Activated CD8-positive, alpha-beta T cell treated with anti-CD3 and anti-CD28 coated beads, Interleukin-2, amount 10 ng/mL, durations not matched to agents 7 days and 5 days (primary cell): ENCODE measurements at regions of chr1 and their contacts with region 1.

Region 1: DNA sequence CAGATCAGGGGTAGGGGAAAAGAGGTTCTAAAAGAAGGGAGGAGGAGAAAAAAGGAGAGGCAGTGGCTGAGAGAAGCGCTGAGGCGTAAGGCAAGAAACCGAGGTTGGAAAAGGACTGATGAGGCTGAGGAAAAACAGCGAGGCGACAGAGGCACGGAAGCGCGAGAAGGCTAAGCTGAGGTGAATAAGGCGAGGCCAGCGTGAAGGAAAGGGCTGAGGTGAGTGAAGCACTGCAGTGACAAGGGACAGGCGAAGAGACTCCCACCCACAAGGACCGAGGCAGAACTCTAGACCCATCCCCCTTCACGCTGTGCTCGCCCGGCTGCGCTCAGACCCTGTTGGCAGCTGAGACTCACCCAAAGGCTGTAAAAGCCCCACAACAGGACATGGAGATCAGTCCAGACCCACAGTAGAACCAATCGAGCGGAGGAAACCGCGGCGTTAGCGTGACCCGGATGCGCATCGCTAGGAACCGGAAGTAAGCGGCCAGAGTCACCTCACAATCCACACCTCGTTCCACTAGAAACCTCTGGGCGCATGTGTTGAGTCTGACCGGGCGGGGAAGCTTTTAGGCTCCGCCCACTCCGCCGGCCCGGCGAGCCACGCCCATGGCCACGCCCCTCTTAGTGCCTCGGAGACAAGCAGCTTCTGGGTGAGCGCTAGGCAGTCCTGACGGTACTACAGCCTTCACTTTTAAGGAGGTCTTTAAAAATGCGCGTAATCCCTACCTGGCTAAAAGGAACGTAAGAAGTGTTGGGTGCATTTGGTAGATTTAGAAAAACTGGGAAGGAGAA is at the start of gene EYA3:
- DNase-seq: peak; percentile 99
- ATAC-seq: peak; percentile 93
- H3K4me3 Mint-ChIP-seq: peak within 1 kb of the TSS; percentile 91
- H3K27ac Mint-ChIP-seq: peak within 1 kb of the TSS; percentile 96
- H3K4me1 Mint-ChIP-seq: peaks cover 38% of the 10 kb centered on the region
- H3K27me3 Mint-ChIP-seq: peaks cover 5% of the 10 kb centered on the region
- total RNA-seq, gene EYA3: 33.5 to 34.5 TPM

Region 2: GRCh38 chr1:27760426-27760825 is 327.9 kb before region 1 on chr1:
- CTCF ChIA-PET with region 1: no interaction called
- POLR2A ChIA-PET with region 1: no interaction called
- DNase-seq: no peak
- ATAC-seq: no peak
- H3K4me3 Mint-ChIP-seq: no peak overlapping the region
- H3K27ac Mint-ChIP-seq: no peak overlapping the region
- H3K4me1 Mint-ChIP-seq: no peaks in the 10 kb centered on the region
- H3K27me3 Mint-ChIP-seq: no peaks in the 10 kb centered on the region

Region 3: GRCh38 chr1:27849951-27850350 is 238.4 kb before region 1 on chr1:
- CTCF ChIA-PET with region 1: no interaction called
- POLR2A ChIA-PET with region 1: no interaction called
- DNase-seq: no peak
- ATAC-seq: no peak
- H3K4me3 Mint-ChIP-seq: no peak overlapping the region
- H3K27ac Mint-ChIP-seq: no peak overlapping the region
- H3K4me1 Mint-ChIP-seq: no peaks in the 10 kb centered on the region
- H3K27me3 Mint-ChIP-seq: no peaks in the 10 kb centered on the region

Region 4: DNA sequence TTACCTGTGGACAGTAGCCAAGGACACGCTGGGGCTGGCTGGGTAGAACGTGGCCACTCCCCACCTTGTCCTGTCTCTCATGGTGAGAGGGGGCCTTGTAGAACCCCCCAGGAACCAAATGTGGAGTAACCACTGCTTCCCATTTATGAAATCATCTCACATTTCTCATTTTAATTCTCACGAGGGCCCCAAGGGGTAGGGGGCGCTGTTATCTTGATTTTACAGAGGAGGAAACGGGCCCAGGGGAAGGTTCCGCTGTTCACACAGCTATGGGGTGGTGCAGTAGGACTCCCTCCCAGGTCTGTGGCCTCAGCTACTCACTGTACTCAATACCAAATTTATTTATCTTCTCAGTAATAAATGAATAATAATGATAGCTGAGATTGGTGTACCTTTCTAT is 148.1 kb before region 1 on chr1:
- CTCF ChIA-PET with region 1: interaction called, 10 read pairs
- POLR2A ChIA-PET with region 1: no interaction called
- DNase-seq: peak; percentile 83
- ATAC-seq: peak; percentile 81
- H3K4me3 Mint-ChIP-seq: no peak overlapping the region
- H3K27ac Mint-ChIP-seq: peak overlapping the region; percentile 28
- H3K4me1 Mint-ChIP-seq: peaks cover 42% of the 10 kb centered on the region
- H3K27me3 Mint-ChIP-seq: peaks cover 8% of the 10 kb centered on the region

Region 5: DNA sequence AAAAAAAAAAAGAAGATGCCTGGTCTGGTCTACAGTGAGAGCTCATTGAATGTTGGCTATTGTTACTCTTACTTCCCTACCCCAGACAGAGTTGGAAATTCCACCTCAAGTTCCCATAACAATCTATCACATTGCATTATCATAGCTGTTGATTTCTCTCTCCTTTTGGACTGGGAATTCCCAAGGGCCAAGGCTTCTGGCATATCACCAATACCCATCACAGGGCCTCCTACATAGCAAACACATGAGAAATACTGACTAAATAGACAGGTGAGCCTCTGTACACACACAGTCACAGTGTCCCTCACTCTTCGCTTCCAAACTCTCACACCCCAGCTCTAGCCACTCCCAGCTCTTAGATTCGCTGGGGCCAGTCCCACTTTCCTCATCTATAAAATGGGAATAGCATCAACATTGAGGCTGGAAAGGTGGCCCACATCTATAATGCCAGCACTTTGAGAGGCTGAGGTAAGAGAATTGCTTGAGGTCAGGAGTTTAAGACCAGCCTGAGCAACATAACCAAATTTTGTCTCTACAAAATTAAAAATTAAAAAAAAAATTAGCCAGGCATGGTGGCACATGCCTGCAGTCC is 81.7 kb after region 1 on chr1:
- CTCF ChIA-PET with region 1: interaction called, 14 read pairs
- POLR2A ChIA-PET with region 1: interaction called, 6 read pairs
- DNase-seq: no peak
- ATAC-seq: no peak
- H3K4me3 Mint-ChIP-seq: no peak overlapping the region
- H3K27ac Mint-ChIP-seq: no peak overlapping the region
- H3K4me1 Mint-ChIP-seq: peaks cover 58% of the 10 kb centered on the region
- H3K27me3 Mint-ChIP-seq: peaks cover 21% of the 10 kb centered on the region

Region 6: DNA sequence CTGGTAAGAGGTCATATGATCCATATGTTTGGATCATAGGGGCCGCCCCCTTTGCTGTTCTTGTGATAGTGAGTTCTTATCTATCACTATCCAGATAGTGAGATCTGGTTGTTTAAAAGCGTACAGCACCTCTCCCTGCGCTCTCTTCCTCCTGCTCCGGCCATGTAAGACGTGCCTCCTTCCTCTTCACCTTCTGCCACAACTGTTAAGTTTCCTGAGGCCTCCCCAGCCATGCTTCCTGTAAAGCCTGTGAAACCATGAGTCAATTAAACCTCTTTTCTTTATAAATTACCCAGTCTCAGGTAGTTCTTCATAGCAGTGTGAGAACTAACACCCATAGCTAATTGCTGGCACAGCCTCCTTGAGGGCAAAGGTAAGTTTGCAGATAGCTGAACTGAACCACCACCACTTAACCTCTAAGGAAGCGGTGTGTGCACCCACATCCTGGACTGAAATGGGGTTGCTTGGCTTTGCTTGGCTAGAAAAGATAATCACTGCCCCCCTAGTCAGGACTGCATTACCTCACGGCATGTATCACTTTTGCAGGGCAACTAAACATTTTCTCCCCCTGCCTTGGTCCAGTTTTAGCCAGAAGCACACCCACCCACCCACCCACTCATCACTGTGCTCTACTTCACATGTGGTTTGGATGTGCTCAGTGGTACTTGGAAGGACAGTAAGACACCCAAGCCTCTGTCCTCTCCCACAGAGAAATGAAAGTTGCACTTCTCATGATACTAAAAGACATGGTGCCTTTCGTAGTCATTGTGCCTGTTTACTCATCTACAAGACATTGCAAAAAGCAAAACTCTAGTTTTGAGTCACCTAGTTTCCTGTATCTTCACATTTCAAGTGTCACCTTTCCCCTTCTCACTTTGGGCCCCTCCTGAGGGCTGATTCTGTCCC is 111.2 kb after region 1 on chr1:
- CTCF ChIA-PET with region 1: interaction called, 217 read pairs
- POLR2A ChIA-PET with region 1: interaction called, 12 read pairs
- DNase-seq: peak; percentile 94
- ATAC-seq: peak; percentile 89
- H3K4me3 Mint-ChIP-seq: peak overlapping the region; percentile 50
- H3K27ac Mint-ChIP-seq: peak overlapping the region; percentile 93
- H3K4me1 Mint-ChIP-seq: peaks cover 62% of the 10 kb centered on the region
- H3K27me3 Mint-ChIP-seq: no peaks in the 10 kb centered on the region

Region 7: GRCh38 chr1:28235755-28236655 is 147.6 kb after region 1 on chr1 and contains the start of gene ATP5IF1:
- CTCF ChIA-PET with region 1: interaction called, 10 read pairs
- POLR2A ChIA-PET with region 1: interaction called, 3 read pairs
- DNase-seq: peak; percentile 97
- ATAC-seq: peak; percentile 97
- H3K4me3 Mint-ChIP-seq: no peak within 1 kb of the TSS
- H3K27ac Mint-ChIP-seq: no peak within 1 kb of the TSS
- H3K4me1 Mint-ChIP-seq: peaks cover 22% of the 10 kb centered on the region
- H3K27me3 Mint-ChIP-seq: no peaks in the 10 kb centered on the region
- total RNA-seq, gene ATP5IF1: 204 to 222 TPM